Activated T-helper 1 cell treated with anti-CD3 and anti-CD28 coated beads, Interleukin-12 subunit alpha, Interleukin-12 subunit beta, Interleukin-2, Interleukin-4 antibody, amounts not matched to agents 30 ng/mL and 10 ng/mL and 1 ng/mL, durations not matched to agents 14 hours and 24 hours and 36 hours (primary cell): ENCODE measurements at regions of chr21 and their contacts with region 1.

Region 1: GRCh38 chr21:35026617-35027562 is 22.2 kb downstream of the RUNX1 start:
- DNase-seq: peak; percentile 83
- H3K4me3 Mint-ChIP-seq: peak overlapping the region; percentile 85
- H3K27ac Mint-ChIP-seq: peak overlapping the region; percentile 99
- H3K4me1 Mint-ChIP-seq: peaks cover 91% of the 10 kb centered on the region
- H3K27me3 Mint-ChIP-seq: no peaks in the 10 kb centered on the region

Region 2: GRCh38 chr21:34807146-34807880 is 219.6 kb before region 1 on chr21:
- intact Hi-C with region 1: loop called (anchors 5 kb)
- DNase-seq: peak; percentile 54
- H3K4me3 Mint-ChIP-seq: peak overlapping the region; percentile 56
- H3K27ac Mint-ChIP-seq: peak overlapping the region; percentile 93
- H3K4me1 Mint-ChIP-seq: peaks cover 92% of the 10 kb centered on the region
- H3K27me3 Mint-ChIP-seq: no peaks in the 10 kb centered on the region

Region 3: DNA sequence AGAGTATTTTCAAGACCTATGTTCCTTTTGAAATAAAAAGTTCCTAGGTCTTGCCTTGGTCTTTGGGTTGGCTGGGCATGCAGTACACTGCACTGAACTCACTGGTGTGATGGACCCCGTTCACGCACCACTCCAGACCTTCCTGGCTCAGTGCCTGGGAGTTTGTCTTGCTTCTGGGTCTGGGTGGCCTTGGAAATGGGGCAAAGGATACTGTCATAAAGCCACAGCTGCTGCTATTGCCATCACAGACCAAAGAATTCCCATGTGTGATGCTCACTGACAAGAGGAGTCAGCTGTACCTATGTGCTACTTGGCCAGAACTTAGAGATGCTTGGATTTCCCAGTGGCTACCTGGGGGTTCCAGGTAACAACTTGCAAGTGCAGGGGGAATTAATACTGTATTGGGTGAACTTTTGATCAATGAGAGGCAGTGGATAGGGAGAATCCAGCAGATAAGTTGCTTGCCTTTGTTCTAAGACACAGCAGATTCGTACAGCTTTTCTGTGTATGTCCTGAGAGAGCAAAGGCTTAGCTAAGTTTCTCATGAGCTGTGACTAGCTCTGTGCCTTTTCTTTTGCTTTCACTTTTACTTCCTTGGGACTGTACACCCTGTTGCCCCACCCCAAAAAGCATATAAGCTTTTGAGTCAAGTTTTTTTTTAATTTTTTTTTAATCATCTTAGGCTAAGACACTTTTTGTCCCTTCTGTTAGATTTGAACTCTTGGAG is 93.1 kb before region 1 on chr21:
- intact Hi-C with region 1: loop called (anchors 2 kb)
- DNase-seq: peak; percentile 37
- H3K4me3 Mint-ChIP-seq: peak overlapping the region; percentile 75
- H3K27ac Mint-ChIP-seq: peak overlapping the region; percentile 95
- H3K4me1 Mint-ChIP-seq: peaks cover 86% of the 10 kb centered on the region
- H3K27me3 Mint-ChIP-seq: no peaks in the 10 kb centered on the region

Region 4: GRCh38 chr21:34946916-34947534 is 79.9 kb before region 1 on chr21:
- intact Hi-C with region 1: loop called (anchors 1 kb)
- DNase-seq: no peak
- H3K4me3 Mint-ChIP-seq: no peak overlapping the region
- H3K27ac Mint-ChIP-seq: peak overlapping the region; percentile 90
- H3K4me1 Mint-ChIP-seq: peaks cover 62% of the 10 kb centered on the region
- H3K27me3 Mint-ChIP-seq: no peaks in the 10 kb centered on the region

Region 5: GRCh38 chr21:34974162-34974981 is 52.5 kb before region 1 on chr21:
- intact Hi-C with region 1: loop called (anchors 2 kb)
- DNase-seq: peak; percentile 65
- H3K4me3 Mint-ChIP-seq: peak overlapping the region; percentile 72
- H3K27ac Mint-ChIP-seq: peak overlapping the region; percentile 79
- H3K4me1 Mint-ChIP-seq: peaks cover 80% of the 10 kb centered on the region
- H3K27me3 Mint-ChIP-seq: peaks cover 12% of the 10 kb centered on the region

Region 6: DNA sequence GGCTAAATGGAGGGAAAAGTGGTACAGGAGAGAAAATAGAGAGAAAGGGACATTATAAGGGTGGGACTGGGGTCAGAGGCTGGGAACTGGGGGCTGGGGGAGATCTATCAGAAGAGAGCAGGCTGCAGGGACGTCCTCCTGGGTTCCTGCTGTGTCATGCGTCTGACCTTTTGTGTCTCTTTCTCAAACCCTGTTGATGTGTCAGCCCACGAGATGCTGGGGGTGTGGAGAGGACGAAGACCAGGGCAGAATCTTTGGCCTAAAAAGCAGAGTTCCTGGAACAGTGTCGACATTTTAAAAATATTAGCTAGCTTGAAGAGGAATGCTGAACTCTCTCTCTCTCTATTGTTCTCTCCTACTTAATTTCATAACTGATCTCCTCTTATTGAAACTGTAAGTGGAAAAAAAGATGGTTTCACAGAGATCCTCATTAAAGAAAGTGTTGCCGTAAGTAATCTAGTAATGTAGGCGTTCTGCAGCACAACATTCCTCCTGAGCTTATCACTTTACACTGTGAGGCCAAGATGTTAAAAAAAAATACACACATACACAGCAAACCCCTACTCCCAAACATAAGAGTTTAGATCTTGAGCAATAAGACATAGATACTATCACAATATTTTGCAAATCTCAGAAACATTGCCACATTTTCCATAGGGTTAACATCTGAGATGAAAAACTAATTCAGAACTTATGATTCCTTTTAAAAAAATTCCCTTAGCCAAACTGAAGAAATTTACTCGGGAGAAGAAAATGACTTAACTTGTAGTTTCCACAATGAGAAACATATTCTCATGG is 30.4 kb before region 1 on chr21:
- intact Hi-C with region 1: no loop called
- DNase-seq: no peak
- H3K4me3 Mint-ChIP-seq: peak overlapping the region; percentile 23
- H3K27ac Mint-ChIP-seq: peak overlapping the region; percentile 79
- H3K4me1 Mint-ChIP-seq: peaks cover 47% of the 10 kb centered on the region
- H3K27me3 Mint-ChIP-seq: no peaks in the 10 kb centered on the region

Region 7: GRCh38 chr21:35014302-35015041 is 12.4 kb before region 1 on chr21:
- intact Hi-C with region 1: loop called (anchors 1 kb)
- DNase-seq: no peak
- H3K4me3 Mint-ChIP-seq: peak overlapping the region; percentile 35
- H3K27ac Mint-ChIP-seq: no peak overlapping the region
- H3K4me1 Mint-ChIP-seq: peaks cover 77% of the 10 kb centered on the region
- H3K27me3 Mint-ChIP-seq: no peaks in the 10 kb centered on the region

Region 8: DNA sequence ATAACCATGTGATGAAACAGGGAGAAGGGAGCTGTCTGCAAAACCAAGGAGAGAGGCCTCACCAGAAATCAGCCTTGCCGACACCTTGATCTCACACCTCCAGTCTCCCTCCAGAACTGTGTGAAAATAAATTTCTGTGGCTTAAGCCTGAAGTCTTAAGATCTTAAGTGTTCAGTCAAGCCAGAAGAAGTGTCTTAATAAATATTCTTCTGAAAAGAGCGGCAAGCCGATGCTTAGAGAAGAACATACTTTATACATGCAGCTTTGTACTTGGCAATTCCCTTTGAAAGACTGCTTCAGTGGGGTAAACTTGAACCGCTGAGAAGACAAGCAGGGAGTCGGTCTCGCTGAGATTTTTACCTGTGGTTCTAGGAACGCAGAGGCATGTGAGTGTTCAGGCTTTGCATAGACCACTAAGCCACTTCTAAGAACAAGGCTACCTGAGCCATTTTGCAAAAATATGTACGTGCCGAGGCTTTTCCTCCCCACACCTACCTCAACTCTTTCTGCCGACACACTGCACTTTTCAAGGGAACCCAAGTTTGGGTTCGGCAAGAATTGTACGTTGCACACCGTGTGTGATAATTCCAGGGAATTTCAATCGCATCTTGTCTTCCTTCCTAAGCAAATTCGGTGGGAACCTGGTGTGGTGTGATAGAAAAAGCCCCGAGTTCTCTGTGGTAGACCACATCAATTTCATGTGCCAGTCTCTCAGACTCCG is 18.8 kb after region 1 on chr21:
- intact Hi-C with region 1: loop called (anchors 1 kb)
- DNase-seq: peak; percentile 58
- H3K4me3 Mint-ChIP-seq: peak overlapping the region; percentile 93
- H3K27ac Mint-ChIP-seq: peak overlapping the region; percentile 98
- H3K4me1 Mint-ChIP-seq: peaks cover 95% of the 10 kb centered on the region
- H3K27me3 Mint-ChIP-seq: no peaks in the 10 kb centered on the region